Esophagus muscularis mucosa (tissue), 4 donors: ENCODE measurements at regions of chr3 and their contacts with region 1.

Region 1: GRCh38 chr3:164522073-164522763 is 556.1 kb downstream of the SI start:
- DNase-seq: no peak
- H3K4me3 ChIP-seq: no peak overlapping the region
- H3K27ac ChIP-seq: no peak overlapping the region
- H3K4me1 ChIP-seq: no peaks in the 10 kb centered on the region
- H3K27me3 ChIP-seq: no peaks in the 10 kb centered on the region
- CTCF ChIP-seq: no peak
- EP300 ChIP-seq: no peak
- POLR2A ChIP-seq: no peak

Region 2: DNA sequence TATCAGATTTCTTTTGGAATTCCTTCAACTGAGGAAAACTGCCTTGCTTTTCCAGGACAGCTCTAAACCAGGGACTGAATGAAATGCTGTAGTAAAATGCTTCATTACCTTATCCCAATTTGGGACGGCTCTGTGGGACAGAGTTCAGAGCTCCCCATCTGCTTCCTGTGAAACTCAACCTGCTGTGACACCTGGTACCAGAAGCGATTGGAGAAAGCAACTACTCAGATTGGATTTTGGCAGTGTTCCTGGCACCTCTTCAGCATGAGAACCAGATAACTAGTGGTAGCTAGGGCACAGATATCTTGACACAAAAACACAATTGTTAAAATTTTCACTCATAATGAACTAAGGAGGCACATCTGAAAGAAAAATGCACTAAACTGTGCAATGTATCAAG is 17.0 kb after region 1 on chr3:
- intact Hi-C with region 1: loop called (anchors 2 kb)
- DNase-seq: no peak
- H3K4me3 ChIP-seq: no peak overlapping the region
- H3K27ac ChIP-seq: no peak overlapping the region
- H3K4me1 ChIP-seq: no peaks in the 10 kb centered on the region
- H3K27me3 ChIP-seq: no peaks in the 10 kb centered on the region
- CTCF ChIP-seq: no peak
- EP300 ChIP-seq: no peak
- POLR2A ChIP-seq: no peak